ENCODE measurements at regions of chr2 and their contacts with region 1.

Region 1: DNA sequence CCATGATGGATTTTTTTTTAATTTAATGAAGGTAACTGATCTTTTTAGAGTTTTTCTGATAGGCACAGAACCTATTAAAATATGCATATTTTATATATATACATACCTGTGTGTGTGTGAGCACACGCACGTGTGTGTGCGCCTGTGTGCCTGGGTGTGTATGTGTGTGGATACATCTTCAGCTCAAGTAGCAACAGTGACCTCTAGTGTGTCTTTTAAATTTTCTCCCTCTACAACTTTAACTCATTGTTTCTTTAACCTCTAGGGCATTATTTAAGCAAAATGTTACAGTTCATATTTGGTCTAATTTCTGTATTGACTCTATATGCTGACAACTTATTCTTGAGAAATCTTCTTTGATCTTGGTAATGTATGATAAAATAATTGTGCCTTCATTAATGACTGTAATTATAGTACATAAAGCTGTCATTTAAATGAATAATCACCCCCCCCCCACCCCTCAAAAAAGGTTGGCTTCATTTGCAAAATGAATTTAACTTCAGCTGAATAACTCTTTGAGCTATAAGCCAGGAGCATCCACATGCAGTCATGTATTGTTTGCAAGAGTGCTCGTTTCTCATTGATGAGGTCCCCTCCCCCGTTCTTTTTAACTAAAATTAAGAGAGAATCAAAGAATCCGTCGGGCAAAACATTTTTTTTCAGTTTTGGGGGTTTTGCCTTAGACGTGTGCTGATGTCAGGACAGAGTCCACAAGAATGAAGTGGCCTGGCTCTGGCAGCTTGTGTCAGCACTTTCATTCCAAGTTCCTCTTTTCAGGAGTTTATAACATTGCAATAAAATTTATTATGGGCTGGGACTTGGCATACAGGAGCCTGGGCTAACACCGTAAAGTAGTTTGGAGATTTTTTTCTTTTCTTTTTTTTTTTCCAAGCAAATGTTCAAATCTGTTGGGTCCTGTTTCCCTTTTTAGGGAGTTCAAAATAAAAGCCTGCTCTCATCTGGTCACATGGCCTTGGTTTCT is 80.0 kb downstream of the ETAA1 start:
- DNase-seq: no peak
- ATAC-seq: peak in 3 of 4 donors; percentile 42 to 71 (median 63)
- H3K4me3 ChIP-seq: no peak overlapping the region
- H3K27ac ChIP-seq: no peak overlapping the region
- H3K4me1 ChIP-seq: no peaks in the 10 kb centered on the region
- H3K27me3 ChIP-seq: peaks cover 0 to 2% (median 0%) of the 10 kb centered on the region in 3 donors
- CTCF ChIP-seq: peak; percentile 50

Region 2: GRCh38 chr2:67397143-67397986 is 79.7 kb before region 1 on chr2 and contains the start of gene ETAA1:
- intact Hi-C with region 1: loop called in 1 of 2 experiments (anchors 10 kb)
- DNase-seq: peak; percentile 94 to 96
- ATAC-seq: peak; percentile 100
- H3K4me3 ChIP-seq: peak within 1 kb of the TSS; percentile 97
- H3K27ac ChIP-seq: peak within 1 kb of the TSS; percentile 91
- H3K4me1 ChIP-seq: peaks cover 4% of the 10 kb centered on the region
- H3K27me3 ChIP-seq: no peaks in the 10 kb centered on the region
- CTCF ChIP-seq: no peak
- total RNA-seq, gene ETAA1: 2.7 to 3.6 (median 2.9) TPM

Measured in psoas muscle (tissue), 8 donors.